ENCODE measurements at regions of chr3 and their contacts with region 1.

Region 1: GRCh38 chr3:33687406-33688010 is 30.5 kb downstream of the CLASP2 start:
- DNase-seq: no peak
- ATAC-seq: no peak
- H3K4me3 ChIP-seq: no peak overlapping the region
- H3K27ac ChIP-seq: no peak overlapping the region
- H3K4me1 ChIP-seq: no peaks in the 10 kb centered on the region
- H3K27me3 ChIP-seq: no peaks in the 10 kb centered on the region
- CTCF ChIP-seq: no peak

Region 2: GRCh38 chr3:33645060-33645647 is 42.4 kb before region 1 on chr3:
- intact Hi-C with region 1: no loop called
- DNase-seq: no peak
- ATAC-seq: peak in 3 of 4 donors; percentile 40 to 83 (median 72)
- H3K4me3 ChIP-seq: peak overlapping the region; percentile 50
- H3K27ac ChIP-seq: no peak overlapping the region
- H3K4me1 ChIP-seq: peaks cover 10% of the 10 kb centered on the region
- H3K27me3 ChIP-seq: no peaks in the 10 kb centered on the region
- CTCF ChIP-seq: no peak

Region 3: GRCh38 chr3:34305266-34305665 is 617.8 kb after region 1 on chr3:
- intact Hi-C with region 1: loop called in 1 of 2 experiments (anchors 5 kb)
- DNase-seq: no peak
- ATAC-seq: no peak
- H3K4me3 ChIP-seq: no peak overlapping the region
- H3K27ac ChIP-seq: no peak overlapping the region
- H3K4me1 ChIP-seq: no peaks in the 10 kb centered on the region
- H3K27me3 ChIP-seq: no peaks in the 10 kb centered on the region
- CTCF ChIP-seq: no peak